ENCODE measurements at regions of chr12 and their contacts with region 1.

Region 1: GRCh38 chr12:118190266-118190665 is 54.3 kb downstream of the PEBP1 start:
- DNase-seq: no peak
- ATAC-seq: no peak
- H3K4me3 Mint-ChIP-seq: no peak overlapping the region
- H3K27ac Mint-ChIP-seq: no peak overlapping the region
- H3K4me1 Mint-ChIP-seq: peaks cover 14% of the 10 kb centered on the region
- H3K27me3 Mint-ChIP-seq: no peaks in the 10 kb centered on the region
- CTCF ChIP-seq: no peak

Region 2: DNA sequence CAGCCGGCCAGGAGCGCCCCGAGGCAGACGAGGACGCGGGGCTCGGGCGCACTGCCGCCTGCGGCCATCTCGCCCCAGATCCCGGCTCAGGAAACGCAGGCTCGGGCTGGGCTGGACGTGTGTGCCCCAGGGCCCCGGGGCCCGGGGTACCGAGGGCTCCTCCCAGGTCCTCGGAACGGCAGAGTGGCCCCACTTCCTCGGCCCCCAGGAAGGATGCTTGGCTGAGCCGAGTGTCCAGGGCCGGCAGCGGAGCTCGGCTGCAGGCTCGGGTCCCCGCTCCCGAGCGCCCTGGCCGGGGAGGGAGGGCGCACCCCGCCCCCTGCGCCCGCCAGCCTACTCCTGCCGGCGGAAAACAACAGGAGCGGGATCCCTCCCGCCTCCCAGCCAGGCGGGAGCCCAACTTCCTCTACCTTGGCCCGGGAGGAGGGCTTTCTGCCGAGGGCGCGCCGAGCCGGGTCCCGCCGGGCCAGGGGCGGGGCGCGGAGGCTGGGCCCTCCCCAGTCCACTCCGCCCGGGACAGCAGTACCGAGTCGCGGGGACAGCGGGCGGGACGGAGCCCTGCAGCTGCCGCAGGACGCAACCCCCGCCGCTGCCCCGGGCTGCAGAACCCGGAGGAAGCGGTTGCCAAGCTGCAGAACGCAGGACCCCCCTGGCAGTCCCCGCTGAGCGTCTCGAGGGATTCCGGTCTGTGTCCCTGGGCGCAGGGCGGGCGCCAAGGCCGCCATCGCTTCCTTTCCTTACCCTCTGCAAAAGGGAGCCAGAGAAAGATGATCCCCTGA is 86.5 kb before region 1 on chr12 and contains the start of gene VSIG10:
- CTCF ChIA-PET with region 1: no interaction called
- POLR2A ChIA-PET with region 1: no interaction called
- intact Hi-C with region 1: no loop called
- DNase-seq: peak; percentile 24
- ATAC-seq: peak; percentile 60
- H3K4me3 Mint-ChIP-seq: peak within 1 kb of the TSS; percentile 73
- H3K27ac Mint-ChIP-seq: no peak within 1 kb of the TSS
- H3K4me1 Mint-ChIP-seq: peaks cover 7% of the 10 kb centered on the region
- H3K27me3 Mint-ChIP-seq: peaks cover 15% of the 10 kb centered on the region
- CTCF ChIP-seq: no peak
- total RNA-seq, gene VSIG10: 4.2 to 5.3 TPM

Region 3: GRCh38 chr12:118175823-118176447 is 14.3 kb before region 1 on chr12:
- CTCF ChIA-PET with region 1: interaction called, 11 read pairs
- POLR2A ChIA-PET with region 1: no interaction called
- intact Hi-C with region 1: no loop called
- DNase-seq: no peak
- ATAC-seq: no peak
- H3K4me3 Mint-ChIP-seq: no peak overlapping the region
- H3K27ac Mint-ChIP-seq: no peak overlapping the region
- H3K4me1 Mint-ChIP-seq: no peaks in the 10 kb centered on the region
- H3K27me3 Mint-ChIP-seq: no peaks in the 10 kb centered on the region
- CTCF ChIP-seq: no peak